A549 (cell line): ENCODE measurements at regions of chr12 and their contacts with region 1.

Region 1: GRCh38 chr12:49842519-49843352 is at the start of gene BCDIN3D:
- DNase-seq: peak; percentile 78 to 94
- ATAC-seq: peak; percentile 94 to 98
- H3K4me3 ChIP-seq: peak within 1 kb of the TSS; percentile 86
- H3K27ac ChIP-seq: peak within 1 kb of the TSS; percentile 78 to 96
- H3K4me1 ChIP-seq: peaks cover 15% of the 10 kb centered on the region
- CTCF ChIP-seq: no peak
- EP300 ChIP-seq: no peak
- POLR2A ChIP-seq: peak; percentile 91
- RAD21 ChIP-seq: no peak
- polyA plus RNA-seq, gene BCDIN3D: 5.8 and 6.9 TPM in 2 replicates

Region 2: DNA sequence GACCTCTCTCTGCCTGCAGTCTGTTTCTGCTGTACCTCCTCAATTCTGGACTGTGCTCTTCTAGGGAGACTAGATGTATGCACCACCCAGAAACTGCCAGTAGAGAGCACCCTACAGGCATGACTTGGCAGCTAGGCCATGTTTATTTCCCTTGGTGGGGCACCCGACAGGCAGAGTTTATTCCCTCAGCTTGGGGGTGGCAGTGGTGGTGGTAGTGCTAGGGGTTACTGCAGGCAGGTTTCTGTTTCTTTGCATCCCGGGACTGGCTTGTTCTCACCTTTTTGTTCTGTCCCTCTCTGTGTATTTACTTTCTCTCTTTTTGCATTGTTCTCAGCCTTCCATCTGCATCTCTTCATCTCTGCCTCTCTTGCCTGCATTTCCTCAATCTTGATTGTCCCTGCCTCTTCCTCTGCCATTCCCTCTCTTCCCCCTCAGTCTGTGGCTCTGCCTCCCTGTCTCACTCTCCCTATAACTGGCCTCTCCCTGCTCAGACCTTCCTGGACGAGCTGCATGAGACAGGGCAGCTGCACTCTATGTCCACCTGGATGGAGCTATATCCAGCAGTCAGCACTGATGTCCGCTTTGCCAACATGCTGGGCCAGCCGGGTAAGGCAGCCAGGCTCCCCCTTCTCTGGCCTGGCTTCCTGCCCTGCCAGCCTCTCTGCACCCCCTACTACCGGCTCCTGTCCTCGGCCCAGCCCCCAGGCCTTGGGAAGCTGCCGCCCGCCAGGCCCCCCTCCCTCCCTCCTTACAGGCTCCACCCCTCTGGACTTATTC is 205.6 kb before region 1 on chr12:
- CTCF ChIA-PET with region 1: interaction called, 15 read pairs
- POLR2A ChIA-PET with region 1: no interaction called
- DNase-seq: peak; percentile 67 to 81
- ATAC-seq: peak; percentile 82 to 96
- H3K4me3 ChIP-seq: no peak overlapping the region
- H3K27ac ChIP-seq: peak overlapping the region in 1 of 2 experiments; percentile 40; a peak in 2 of 6 replicates
- H3K4me1 ChIP-seq: no peaks in the 10 kb centered on the region
- CTCF ChIP-seq: peak; percentile 47
- EP300 ChIP-seq: no peak
- POLR2A ChIP-seq: no peak
- RAD21 ChIP-seq: peak; percentile 36 to 66; a peak in 3 of 5 replicates

Region 3: GRCh38 chr12:49740930-49741881 is 101.5 kb before region 1 on chr12 and contains the start of gene TMBIM6:
- CTCF ChIA-PET with region 1: interaction called, 13 read pairs
- POLR2A ChIA-PET with region 1: interaction called, 18 read pairs
- DNase-seq: peak; percentile 97 to 100
- ATAC-seq: peak; percentile 98
- H3K4me3 ChIP-seq: peak within 1 kb of the TSS; percentile 67
- H3K27ac ChIP-seq: peak within 1 kb of the TSS; percentile 71 to 92
- H3K4me1 ChIP-seq: peaks cover 18% of the 10 kb centered on the region
- CTCF ChIP-seq: peak; percentile 81
- EP300 ChIP-seq: no peak
- POLR2A ChIP-seq: peak; percentile 97
- RAD21 ChIP-seq: peak; percentile 42 to 62; a peak in 4 of 5 replicates
- polyA plus RNA-seq, gene TMBIM6: 1,088 and 1,255 TPM in 2 replicates

Region 4: DNA sequence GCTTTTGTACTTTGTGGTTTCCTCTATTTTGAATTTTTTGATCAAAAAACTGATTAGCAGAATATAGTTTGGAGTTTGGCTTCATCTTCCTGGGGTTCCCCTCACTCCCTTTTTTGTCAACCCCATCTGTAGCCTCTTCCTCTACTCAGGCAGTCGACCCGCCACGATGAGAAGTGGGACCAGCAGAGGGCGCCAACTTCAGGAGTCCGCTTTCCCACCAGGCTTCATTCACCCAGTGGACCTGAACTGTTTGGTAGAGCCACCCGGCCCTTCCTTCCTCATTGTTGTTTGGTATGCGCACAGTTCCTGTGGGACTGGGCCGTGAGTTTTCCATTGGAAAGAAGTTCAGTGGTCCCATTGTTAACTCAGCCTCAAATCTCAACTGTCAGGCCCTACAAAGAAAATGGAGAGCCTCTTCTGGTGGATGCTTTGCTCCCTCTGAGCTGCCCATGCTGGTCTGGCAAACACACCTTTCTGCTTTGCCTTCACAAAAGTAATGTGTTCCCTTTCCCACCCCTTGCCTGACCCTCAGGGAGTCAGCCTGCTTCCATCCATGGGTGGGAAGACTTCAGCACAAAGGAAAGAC is 79.6 kb before region 1 on chr12:
- CTCF ChIA-PET with region 1: interaction called, 27 read pairs
- POLR2A ChIA-PET with region 1: no interaction called
- DNase-seq: peak; percentile 67 to 81
- ATAC-seq: peak; percentile 83 to 84
- H3K4me3 ChIP-seq: no peak overlapping the region
- H3K27ac ChIP-seq: no peak overlapping the region
- H3K4me1 ChIP-seq: no peaks in the 10 kb centered on the region
- CTCF ChIP-seq: peak; percentile 82
- EP300 ChIP-seq: no peak
- POLR2A ChIP-seq: no peak
- RAD21 ChIP-seq: peak in 1 of 2 experiments; percentile 9; a peak in 1 of 5 replicates

Region 5: DNA sequence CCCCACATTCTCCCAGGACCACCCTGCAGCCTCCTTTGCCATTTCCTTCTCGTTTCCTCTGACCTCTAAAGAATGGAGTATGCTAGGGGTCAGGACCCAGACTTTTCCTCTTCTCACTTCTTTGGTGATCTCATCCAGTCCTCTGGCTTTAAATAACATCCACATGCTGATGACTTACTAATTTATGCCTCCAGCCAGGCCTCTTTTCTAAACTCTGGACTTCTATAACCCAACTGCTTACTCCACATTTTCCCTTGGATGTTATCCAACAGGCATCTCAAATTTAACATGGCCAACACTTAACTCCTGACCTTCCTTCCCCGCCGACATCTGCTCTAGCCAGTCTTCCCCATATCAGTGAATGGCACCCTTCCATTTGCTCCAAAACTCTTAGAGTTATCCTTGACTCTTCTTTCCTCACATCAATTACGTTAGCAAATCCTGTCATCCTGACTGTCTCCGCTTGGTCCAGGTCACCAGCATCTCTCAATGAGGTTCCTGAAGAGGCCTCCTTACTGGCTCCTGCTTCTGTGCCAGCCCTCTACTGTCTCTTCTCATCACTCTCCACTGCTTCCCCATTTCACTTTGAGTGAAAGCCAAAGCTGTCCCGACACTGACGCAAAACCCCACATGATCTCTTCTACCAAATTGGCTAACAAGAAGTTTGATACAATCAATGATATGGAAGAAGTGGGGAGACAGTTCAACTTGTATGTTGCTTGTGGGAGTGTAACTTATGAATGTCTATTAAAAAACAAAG is 58.6 kb before region 1 on chr12:
- CTCF ChIA-PET with region 1: interaction called, 69 read pairs
- POLR2A ChIA-PET with region 1: no interaction called
- DNase-seq: no peak
- ATAC-seq: no peak
- H3K4me3 ChIP-seq: no peak overlapping the region
- H3K27ac ChIP-seq: peak overlapping the region in 1 of 2 experiments; percentile 57; a peak in 4 of 6 replicates
- H3K4me1 ChIP-seq: peaks cover 17% of the 10 kb centered on the region
- CTCF ChIP-seq: no peak
- EP300 ChIP-seq: no peak
- POLR2A ChIP-seq: no peak
- RAD21 ChIP-seq: no peak

Region 6: DNA sequence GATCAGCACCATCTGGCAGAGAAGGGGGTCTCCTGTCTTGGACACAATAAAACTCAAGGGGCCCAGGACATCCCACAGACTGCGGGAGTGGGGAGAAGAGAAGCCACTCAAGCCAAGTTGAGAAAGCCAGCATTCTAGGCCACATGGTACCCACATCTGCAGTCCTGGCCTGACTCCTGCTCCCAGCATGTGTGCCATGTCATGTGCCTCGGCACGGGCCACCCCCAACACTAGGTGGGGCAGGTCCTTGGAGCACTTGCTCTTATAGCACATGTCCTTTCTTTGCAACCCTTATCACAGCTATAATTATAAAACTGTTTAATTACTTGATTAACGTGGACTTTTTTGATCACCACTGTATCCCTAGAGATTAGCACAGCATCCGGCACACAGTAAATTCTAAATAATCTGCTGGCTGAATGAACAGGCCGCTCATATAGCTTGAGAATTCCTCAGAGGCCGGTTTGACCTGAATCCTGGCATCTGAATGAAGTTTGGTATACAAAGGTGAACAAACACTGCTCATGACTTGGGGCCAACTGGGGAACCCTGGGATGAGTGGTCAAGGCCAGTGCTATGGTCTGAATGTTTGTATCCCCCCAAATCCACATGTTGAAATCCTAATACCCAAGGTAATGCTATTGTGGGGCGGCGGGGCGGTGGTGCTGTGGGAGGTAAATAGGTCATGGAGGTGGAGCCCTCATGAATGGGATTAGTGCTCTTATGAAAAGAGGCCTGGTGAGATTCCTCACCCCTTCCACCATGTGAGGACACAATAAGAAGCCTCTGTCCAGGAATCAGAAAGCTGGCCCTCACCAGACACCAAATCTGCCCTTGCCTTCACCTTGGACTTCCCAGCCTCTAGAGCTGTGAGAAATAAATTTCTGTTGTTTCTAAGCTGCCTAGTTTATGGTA is 21.1 kb before region 1 on chr12:
- CTCF ChIA-PET with region 1: interaction called, 54 read pairs
- POLR2A ChIA-PET with region 1: interaction called, 4 read pairs
- DNase-seq: no peak
- ATAC-seq: no peak
- H3K4me3 ChIP-seq: no peak overlapping the region
- H3K27ac ChIP-seq: no peak overlapping the region
- H3K4me1 ChIP-seq: peaks cover 4% of the 10 kb centered on the region; the same call in 1 of the 3 replicates
- CTCF ChIP-seq: no peak
- EP300 ChIP-seq: no peak
- POLR2A ChIP-seq: no peak
- RAD21 ChIP-seq: no peak

Region 7: DNA sequence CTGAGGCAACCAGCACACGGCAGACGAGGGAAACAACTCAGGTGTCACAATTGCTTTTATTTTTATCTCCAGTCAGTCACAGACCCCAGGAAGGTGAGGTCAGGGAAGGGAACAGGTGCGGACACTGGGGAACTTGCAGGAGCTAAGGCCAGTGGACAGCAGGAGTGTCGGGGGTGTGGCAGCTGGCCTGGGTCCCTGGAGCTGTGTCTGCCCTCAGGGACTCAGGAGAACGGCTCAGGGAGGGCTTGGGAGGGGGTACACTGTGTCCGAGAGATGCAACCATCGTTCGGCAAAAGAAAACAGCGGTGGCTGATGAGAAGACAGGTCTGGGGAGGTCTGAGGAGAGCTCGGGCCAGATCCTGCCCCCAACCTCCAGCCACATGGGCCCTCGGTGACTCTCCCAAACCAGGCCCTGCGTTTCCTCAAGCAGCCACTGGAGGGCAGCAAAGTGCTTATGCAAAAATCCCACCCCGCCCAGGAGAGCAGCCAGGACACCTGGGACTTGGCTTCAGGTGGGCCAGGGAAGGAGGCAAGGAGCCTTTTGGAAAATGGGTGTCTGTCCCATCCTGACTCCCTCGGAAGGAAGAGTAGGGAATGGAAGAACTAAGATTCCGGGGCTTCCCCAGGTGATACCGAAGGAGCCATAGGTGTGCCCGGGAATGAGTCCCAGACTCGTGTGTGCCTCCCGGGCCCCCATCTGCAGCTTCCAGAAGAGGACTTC is 24.3 kb after region 1 on chr12:
- CTCF ChIA-PET with region 1: interaction called, 24 read pairs
- POLR2A ChIA-PET with region 1: no interaction called
- DNase-seq: peak; percentile 66 to 95
- ATAC-seq: peak; percentile 55 to 92
- H3K4me3 ChIP-seq: no peak overlapping the region
- H3K27ac ChIP-seq: peak overlapping the region in 1 of 2 experiments; percentile 22; a peak in 1 of 6 replicates
- H3K4me1 ChIP-seq: no peaks in the 10 kb centered on the region; the same call in 2 of the 3 replicates
- CTCF ChIP-seq: peak; percentile 88
- EP300 ChIP-seq: no peak
- POLR2A ChIP-seq: no peak
- RAD21 ChIP-seq: peak; percentile 84 to 91

Region 8: GRCh38 chr12:49920241-49920921 is 77.6 kb after region 1 on chr12:
- CTCF ChIA-PET with region 1: no interaction called
- POLR2A ChIA-PET with region 1: no interaction called
- DNase-seq: no peak
- ATAC-seq: no peak; a peak in 1 of 6 replicates
- H3K4me3 ChIP-seq: no peak overlapping the region
- H3K27ac ChIP-seq: no peak overlapping the region
- H3K4me1 ChIP-seq: no peaks in the 10 kb centered on the region
- CTCF ChIP-seq: no peak
- EP300 ChIP-seq: no peak
- POLR2A ChIP-seq: no peak
- RAD21 ChIP-seq: no peak